ENCODE measurements at regions of chr18 and their contacts with region 1.

Region 1: GRCh38 chr18:13775058-13775457 is 48.6 kb downstream of the RNMT start:
- DNase-seq: no peak
- H3K4me3 ChIP-seq: no peak overlapping the region
- H3K4me3 Mint-ChIP-seq: no peak overlapping the region
- H3K27ac Mint-ChIP-seq: no peak overlapping the region
- H3K4me1 ChIP-seq: no peaks in the 10 kb centered on the region
- H3K4me1 Mint-ChIP-seq: no peaks in the 10 kb centered on the region
- H3K27me3 ChIP-seq: no peaks in the 10 kb centered on the region
- H3K27me3 Mint-ChIP-seq: peaks cover 7% of the 10 kb centered on the region
- CTCF ChIP-seq: no peak

Region 2: GRCh38 chr18:13716916-13717315 is 58.1 kb before region 1 on chr18:
- CTCF ChIA-PET with region 1: no interaction called
- POLR2A ChIA-PET with region 1: no interaction called
- intact Hi-C with region 1: loop called (anchors 5 kb)
- DNase-seq: no peak
- H3K4me3 ChIP-seq: no peak overlapping the region
- H3K4me3 Mint-ChIP-seq: no peak overlapping the region
- H3K27ac Mint-ChIP-seq: no peak overlapping the region
- H3K4me1 ChIP-seq: peaks cover 9% of the 10 kb centered on the region; the same call in 1 of the 2 replicates
- H3K4me1 Mint-ChIP-seq: peaks cover 5% of the 10 kb centered on the region
- H3K27me3 ChIP-seq: no peaks in the 10 kb centered on the region
- H3K27me3 Mint-ChIP-seq: no peaks in the 10 kb centered on the region
- CTCF ChIP-seq: no peak

Region 3: GRCh38 chr18:13735681-13736080 is 39.4 kb before region 1 on chr18:
- CTCF ChIA-PET with region 1: no interaction called
- POLR2A ChIA-PET with region 1: no interaction called
- intact Hi-C with region 1: no loop called
- DNase-seq: no peak
- H3K4me3 ChIP-seq: no peak overlapping the region
- H3K4me3 Mint-ChIP-seq: no peak overlapping the region
- H3K27ac Mint-ChIP-seq: no peak overlapping the region
- H3K4me1 ChIP-seq: no peaks in the 10 kb centered on the region
- H3K4me1 Mint-ChIP-seq: no peaks in the 10 kb centered on the region
- H3K27me3 ChIP-seq: no peaks in the 10 kb centered on the region
- H3K27me3 Mint-ChIP-seq: no peaks in the 10 kb centered on the region
- CTCF ChIP-seq: no peak

Measured in Caco-2 (cell line).